ENCODE measurements at regions of chr11 and their contacts with region 1.

Region 1: DNA sequence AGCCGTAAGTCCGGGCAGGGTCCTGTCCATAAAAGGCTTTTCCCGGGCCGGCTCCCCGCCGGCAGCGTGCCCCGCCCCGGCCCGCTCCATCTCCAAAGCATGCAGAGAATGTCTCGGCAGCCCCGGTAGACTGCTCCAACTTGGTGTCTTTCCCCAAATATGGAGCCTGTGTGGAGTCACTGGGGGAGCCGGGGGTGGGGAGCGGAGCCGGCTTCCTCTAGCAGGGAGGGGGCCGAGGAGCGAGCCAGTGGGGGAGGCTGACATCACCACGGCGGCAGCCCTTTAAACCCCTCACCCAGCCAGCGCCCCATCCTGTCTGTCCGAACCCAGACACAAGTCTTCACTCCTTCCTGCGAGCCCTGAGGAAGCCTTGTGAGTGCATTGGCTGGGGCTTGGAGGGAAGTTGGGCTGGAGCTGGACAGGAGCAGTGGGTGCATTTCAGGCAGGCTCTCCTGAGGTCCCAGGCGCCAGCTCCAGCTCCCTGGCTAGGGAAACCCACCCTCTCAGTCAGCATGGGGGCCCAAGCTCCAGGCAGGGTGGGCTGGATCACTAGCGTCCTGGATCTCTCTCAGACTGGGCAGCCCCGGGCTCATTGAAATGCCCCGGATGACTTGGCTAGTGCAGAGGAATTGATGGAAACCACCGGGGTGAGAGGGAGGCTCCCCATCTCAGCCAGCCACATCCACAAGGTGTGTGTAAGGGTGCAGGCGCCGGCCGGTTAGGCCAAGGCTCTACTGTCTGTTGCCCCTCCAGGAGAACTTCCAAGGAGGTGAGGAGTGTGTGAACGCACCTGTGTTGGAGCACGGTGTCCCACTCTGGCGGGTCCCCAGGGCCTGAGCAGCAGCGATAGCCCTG is at the start of gene TAGLN:
- DNase-seq: peak; percentile 86
- total RNA-seq, gene TAGLN: 317 TPM

Region 2: DNA sequence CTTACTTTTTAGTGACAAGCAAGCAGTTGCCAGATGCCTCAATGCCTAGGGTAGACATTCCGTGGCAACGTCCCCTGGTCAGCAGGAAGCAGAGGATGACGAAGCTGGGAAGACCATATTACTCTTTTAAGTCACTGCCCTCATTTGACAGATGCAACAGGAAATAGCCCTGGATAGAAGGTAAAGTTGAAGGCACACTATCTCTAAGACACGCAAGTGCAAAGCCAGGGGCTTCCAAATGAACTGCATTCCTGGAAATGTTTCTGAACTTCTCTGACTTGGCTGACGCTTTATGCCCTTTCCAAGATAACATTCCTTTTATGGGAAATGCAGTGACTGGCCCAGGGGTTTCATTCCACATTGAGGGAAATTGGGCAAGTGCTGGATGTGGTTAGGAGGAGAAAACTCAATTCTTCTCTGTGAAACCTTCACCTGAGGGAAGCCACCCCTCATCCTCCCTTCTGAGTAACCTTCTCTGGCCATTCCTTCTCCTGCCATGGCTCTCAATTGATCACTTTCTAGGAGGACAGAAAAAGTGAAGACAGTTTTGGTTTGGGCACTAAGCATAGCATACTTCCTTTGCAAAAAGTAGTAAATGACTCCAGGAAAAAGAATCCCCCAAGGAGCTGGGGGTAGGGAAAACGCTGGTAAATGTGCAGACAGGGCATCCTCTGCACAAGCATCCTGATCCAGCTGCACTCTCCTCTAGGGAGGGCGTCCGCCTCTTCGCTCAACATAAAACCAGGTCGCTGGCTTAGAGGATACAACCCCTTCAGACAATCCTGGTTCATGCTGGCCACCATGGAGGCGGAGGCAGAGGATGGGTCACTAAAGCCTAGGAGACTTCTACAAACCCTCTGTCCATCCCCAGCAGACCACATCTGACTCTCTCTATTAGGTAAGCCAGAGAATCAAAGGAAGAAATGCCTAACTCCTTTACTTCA is 18.1 kb after region 1 on chr11:
- intact Hi-C with region 1: loop called (anchors 1 kb)
- DNase-seq: no peak

Region 3: GRCh38 chr11:117259417-117259816 is 60.1 kb after region 1 on chr11:
- intact Hi-C with region 1: no loop called
- DNase-seq: no peak